B cell (primary cell): ENCODE measurements at regions of chr6 and their contacts with region 1.

Region 1: DNA sequence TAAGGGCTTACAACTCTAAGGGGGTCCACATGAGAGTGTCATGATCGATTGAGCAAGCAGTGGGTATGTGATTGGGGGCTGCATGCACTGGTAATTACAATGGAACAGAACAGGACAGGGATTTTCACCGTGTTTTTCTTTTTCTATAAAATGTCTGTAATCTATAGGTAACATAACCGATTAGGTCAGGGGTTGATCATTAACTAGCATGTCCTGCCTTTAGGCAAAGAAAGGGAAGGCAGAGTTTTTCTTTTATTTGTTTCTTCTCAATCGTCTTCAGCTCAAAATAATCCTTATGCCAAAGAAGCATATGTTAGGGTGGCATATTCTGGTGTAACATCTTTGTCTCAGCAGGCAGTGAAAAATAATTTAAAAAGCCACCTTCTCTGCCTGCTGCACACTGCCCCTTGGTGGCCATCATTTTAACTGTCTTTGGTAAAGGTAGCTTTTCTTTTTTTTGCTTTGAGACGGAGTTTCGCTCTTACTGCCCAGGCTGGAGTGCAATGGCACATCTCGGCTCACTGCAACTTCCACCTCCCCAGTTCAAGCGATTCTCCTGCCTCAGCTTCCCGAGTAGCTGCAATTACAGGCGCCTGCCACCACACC is 9.7 kb upstream of the CEP43 start:
- DNase-seq: peak; percentile 74
- ATAC-seq: peak; percentile 86
- H3K4me3 ChIP-seq: no peak overlapping the region
- H3K4me3 Mint-ChIP-seq: no peak overlapping the region
- H3K27ac ChIP-seq: no peak overlapping the region
- H3K27ac Mint-ChIP-seq: peak overlapping the region; percentile 0
- H3K4me1 ChIP-seq: no peaks in the 10 kb centered on the region
- H3K4me1 Mint-ChIP-seq: peaks cover 7% of the 10 kb centered on the region
- H3K27me3 ChIP-seq: no peaks in the 10 kb centered on the region
- H3K27me3 Mint-ChIP-seq: no peaks in the 10 kb centered on the region
- CTCF ChIP-seq: peak; percentile 78

Region 2: GRCh38 chr6:166775180-166776081 is 214.1 kb before region 1 on chr6:
- CTCF ChIA-PET with region 1: interaction called, 57 read pairs
- POLR2A ChIA-PET with region 1: interaction called, 3 read pairs
- intact Hi-C with region 1: loop called (anchors 1 kb)
- DNase-seq: peak; percentile 84
- ATAC-seq: peak; percentile 72
- H3K4me3 ChIP-seq: no peak overlapping the region
- H3K4me3 Mint-ChIP-seq: no peak overlapping the region
- H3K27ac ChIP-seq: no peak overlapping the region
- H3K27ac Mint-ChIP-seq: no peak overlapping the region
- H3K4me1 ChIP-seq: peaks cover 0 to 5% of the 10 kb centered on the region in 2 donors
- H3K4me1 Mint-ChIP-seq: peaks cover 2% of the 10 kb centered on the region
- H3K27me3 ChIP-seq: peaks cover 0 to 14% (median 6%) of the 10 kb centered on the region in 4 experiments
- H3K27me3 Mint-ChIP-seq: peaks cover 14% of the 10 kb centered on the region
- CTCF ChIP-seq: peak; percentile 85

Region 3: GRCh38 chr6:166834049-166834448 is 155.5 kb before region 1 on chr6:
- CTCF ChIA-PET with region 1: no interaction called
- POLR2A ChIA-PET with region 1: no interaction called
- intact Hi-C with region 1: no loop called
- DNase-seq: no peak
- ATAC-seq: no peak
- H3K4me3 ChIP-seq: no peak overlapping the region
- H3K4me3 Mint-ChIP-seq: no peak overlapping the region
- H3K27ac ChIP-seq: no peak overlapping the region
- H3K27ac Mint-ChIP-seq: no peak overlapping the region
- H3K4me1 ChIP-seq: peaks cover 9 to 20% of the 10 kb centered on the region in 2 donors
- H3K4me1 Mint-ChIP-seq: peaks cover 18% of the 10 kb centered on the region
- H3K27me3 ChIP-seq: no peaks in the 10 kb centered on the region
- H3K27me3 Mint-ChIP-seq: no peaks in the 10 kb centered on the region
- CTCF ChIP-seq: no peak

Region 4: DNA sequence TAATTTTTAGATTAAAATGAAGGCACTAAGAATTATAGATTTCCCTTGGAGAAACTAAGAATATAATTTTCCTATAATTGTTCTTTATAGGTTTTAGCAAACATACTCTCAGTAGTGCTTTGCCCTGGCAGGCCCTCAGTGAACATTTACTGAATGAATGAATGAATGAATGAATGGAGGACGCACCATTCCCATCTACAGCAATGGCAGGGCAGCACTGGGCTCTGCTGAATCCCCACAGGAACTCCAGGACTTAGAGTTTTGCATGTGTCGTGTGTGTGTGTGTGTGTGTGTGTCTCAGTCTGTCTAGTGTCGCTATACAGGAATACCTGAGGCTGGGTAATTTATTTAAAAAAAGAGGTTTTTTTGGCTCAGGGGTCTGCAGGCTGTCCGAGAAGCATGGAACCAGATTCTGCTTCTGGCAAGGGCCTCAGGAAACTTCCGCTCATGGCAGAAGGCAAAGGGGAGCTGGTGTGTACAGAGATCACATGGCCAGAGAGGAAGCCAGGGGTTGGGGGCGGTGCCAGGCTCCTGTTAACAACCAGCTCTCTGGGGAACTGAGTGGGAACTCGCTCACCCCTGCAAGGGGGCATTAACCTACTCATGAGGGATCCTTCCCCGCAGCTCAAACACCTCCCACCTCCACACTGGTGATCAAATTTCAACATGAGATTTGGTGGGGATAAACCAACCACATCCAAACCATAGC is 53.3 kb before region 1 on chr6:
- CTCF ChIA-PET with region 1: interaction called, 38 read pairs
- POLR2A ChIA-PET with region 1: no interaction called
- intact Hi-C with region 1: no loop called
- DNase-seq: peak; percentile 54
- ATAC-seq: peak; percentile 95
- H3K4me3 ChIP-seq: no peak overlapping the region
- H3K4me3 Mint-ChIP-seq: peak overlapping the region; percentile 21
- H3K27ac ChIP-seq: peak overlapping the region in 1 of 2 donors; percentile 55
- H3K27ac Mint-ChIP-seq: peak overlapping the region; percentile 77
- H3K4me1 ChIP-seq: peaks cover 11 to 14% of the 10 kb centered on the region in 2 donors
- H3K4me1 Mint-ChIP-seq: peaks cover 32% of the 10 kb centered on the region
- H3K27me3 ChIP-seq: no peaks in the 10 kb centered on the region
- H3K27me3 Mint-ChIP-seq: no peaks in the 10 kb centered on the region
- CTCF ChIP-seq: no peak

Region 5: GRCh38 chr6:166969390-166970002 is 20.0 kb before region 1 on chr6:
- CTCF ChIA-PET with region 1: interaction called, 35 read pairs
- POLR2A ChIA-PET with region 1: no interaction called
- intact Hi-C with region 1: no loop called
- DNase-seq: no peak
- ATAC-seq: no peak
- H3K4me3 ChIP-seq: no peak overlapping the region
- H3K4me3 Mint-ChIP-seq: peak overlapping the region; percentile 12
- H3K27ac ChIP-seq: peak overlapping the region in 1 of 2 donors; percentile 3
- H3K27ac Mint-ChIP-seq: peak overlapping the region; percentile 62
- H3K4me1 ChIP-seq: peaks cover 15 to 17% of the 10 kb centered on the region in 2 donors
- H3K4me1 Mint-ChIP-seq: peaks cover 21% of the 10 kb centered on the region
- H3K27me3 ChIP-seq: no peaks in the 10 kb centered on the region
- H3K27me3 Mint-ChIP-seq: no peaks in the 10 kb centered on the region
- CTCF ChIP-seq: no peak

Region 6: DNA sequence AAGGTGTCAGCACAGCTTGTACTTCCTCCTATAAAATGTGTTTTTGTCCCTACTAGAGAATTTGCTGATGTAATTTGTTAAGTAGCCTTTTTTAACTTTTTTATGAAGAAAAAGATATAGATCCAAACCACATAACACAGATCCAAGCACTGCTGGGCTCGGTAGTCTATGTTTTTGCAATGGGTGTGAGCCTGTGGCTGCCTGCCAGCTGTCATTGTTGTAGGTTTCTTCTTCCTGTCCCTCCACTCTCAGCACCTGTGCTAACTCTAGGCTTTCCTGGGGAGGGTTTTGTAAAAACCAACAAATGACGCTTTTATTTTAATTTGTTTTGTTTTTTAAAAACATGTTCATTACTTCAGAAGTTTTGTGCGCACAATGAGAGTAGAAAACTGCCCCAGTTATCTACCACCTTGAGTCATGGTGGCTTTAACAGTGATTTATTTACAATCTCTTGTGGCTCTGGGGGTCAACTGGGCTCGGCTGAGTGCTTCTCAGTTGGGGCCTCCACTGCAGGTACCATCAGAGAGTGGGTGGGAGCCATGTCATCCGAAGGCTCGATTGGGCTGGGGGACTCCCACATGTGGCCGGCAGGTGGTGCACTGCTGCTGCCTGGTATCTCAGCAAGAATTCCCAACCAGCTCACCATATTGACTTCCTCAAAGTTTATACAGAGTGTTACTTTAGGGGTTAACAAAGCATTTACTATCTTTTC is 130.3 kb after region 1 on chr6:
- CTCF ChIA-PET with region 1: interaction called, 14 read pairs
- POLR2A ChIA-PET with region 1: no interaction called
- intact Hi-C with region 1: no loop called
- DNase-seq: peak; percentile 65
- ATAC-seq: no peak
- H3K4me3 ChIP-seq: peak overlapping the region; percentile 2 to 88 (median 15)
- H3K4me3 Mint-ChIP-seq: peak overlapping the region; percentile 96
- H3K27ac ChIP-seq: peak overlapping the region; percentile 97 to 98
- H3K27ac Mint-ChIP-seq: peak overlapping the region; percentile 100
- H3K4me1 ChIP-seq: peaks cover 71 to 84% of the 10 kb centered on the region in 2 donors
- H3K4me1 Mint-ChIP-seq: peaks cover 85% of the 10 kb centered on the region
- H3K27me3 ChIP-seq: no peaks in the 10 kb centered on the region
- H3K27me3 Mint-ChIP-seq: no peaks in the 10 kb centered on the region
- CTCF ChIP-seq: peak; percentile 41

Region 7: GRCh38 chr6:167285077-167285770 is 295.7 kb after region 1 on chr6:
- CTCF ChIA-PET with region 1: no interaction called
- POLR2A ChIA-PET with region 1: no interaction called
- intact Hi-C with region 1: loop called (anchors 5 kb)
- DNase-seq: no peak
- ATAC-seq: no peak
- H3K4me3 ChIP-seq: no peak overlapping the region
- H3K4me3 Mint-ChIP-seq: no peak overlapping the region
- H3K27ac ChIP-seq: no peak overlapping the region
- H3K27ac Mint-ChIP-seq: no peak overlapping the region
- H3K4me1 ChIP-seq: no peaks in the 10 kb centered on the region
- H3K4me1 Mint-ChIP-seq: no peaks in the 10 kb centered on the region
- H3K27me3 ChIP-seq: peaks cover 0 to 7% (median 0%) of the 10 kb centered on the region in 4 experiments
- H3K27me3 Mint-ChIP-seq: peaks cover 17% of the 10 kb centered on the region
- CTCF ChIP-seq: no peak